Tibial artery (tissue), 4 donors: ENCODE measurements at regions of chr7 and their contacts with region 1.

Region 1: GRCh38 chr7:82395147-82395546 is 48.4 kb downstream of the CACNA2D1 start:
- DNase-seq: no peak
- H3K4me3 ChIP-seq: no peak overlapping the region
- H3K27ac ChIP-seq: no peak overlapping the region
- H3K4me1 ChIP-seq: no peaks in the 10 kb centered on the region
- H3K27me3 ChIP-seq: no peaks in the 10 kb centered on the region
- CTCF ChIP-seq: no peak

Region 2: DNA sequence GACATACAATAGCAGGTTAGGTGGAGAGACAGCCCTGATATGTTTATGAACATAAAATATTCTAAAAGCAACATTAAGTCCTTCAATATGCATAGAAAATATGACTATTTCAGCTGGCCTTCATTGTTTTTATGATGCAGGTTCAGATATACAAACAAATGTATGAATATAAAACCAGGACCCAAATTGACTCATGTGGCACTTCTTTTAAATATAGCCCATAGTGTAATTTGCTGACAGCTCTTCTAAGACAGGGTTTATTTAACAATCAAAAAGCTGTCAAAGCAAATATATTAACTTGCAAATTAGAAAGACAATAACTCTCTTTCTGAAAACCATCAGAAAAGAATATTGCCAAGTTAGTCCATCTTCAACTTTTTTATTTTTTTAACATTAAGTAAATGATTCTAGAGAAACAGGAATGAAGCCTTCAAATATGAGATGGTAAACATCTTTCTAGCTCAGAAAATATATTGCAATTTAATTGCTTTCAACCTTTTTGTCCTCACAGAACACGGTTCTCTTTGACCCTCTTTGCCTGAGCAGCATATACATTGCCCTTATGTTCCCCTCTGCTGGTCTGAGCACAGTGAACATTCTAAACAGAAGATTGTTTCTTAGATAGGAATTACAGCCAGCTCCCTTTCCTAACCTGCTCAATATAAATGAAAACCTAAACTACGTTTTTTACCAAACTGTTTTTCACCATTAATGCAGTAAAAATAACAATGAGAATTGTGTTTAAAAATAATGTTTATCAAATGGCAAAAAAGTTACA is 34.4 kb before region 1 on chr7:
- intact Hi-C with region 1: loop called (anchors 2 kb)
- DNase-seq: no peak
- H3K4me3 ChIP-seq: no peak overlapping the region
- H3K27ac ChIP-seq: no peak overlapping the region
- H3K4me1 ChIP-seq: peaks cover 0 to 20% (median 2%) of the 10 kb centered on the region in 4 donors
- H3K27me3 ChIP-seq: no peaks in the 10 kb centered on the region
- CTCF ChIP-seq: no peak

Region 3: GRCh38 chr7:82444220-82444909 is 49.2 kb after region 1 on chr7:
- intact Hi-C with region 1: no loop called
- DNase-seq: no peak
- H3K4me3 ChIP-seq: peak overlapping the region; percentile 95 to 99
- H3K27ac ChIP-seq: peak overlapping the region; percentile 95 to 96
- H3K4me1 ChIP-seq: peaks cover 0 to 23% (median 7%) of the 10 kb centered on the region in 4 donors
- H3K27me3 ChIP-seq: no peaks in the 10 kb centered on the region
- CTCF ChIP-seq: no peak

Region 4: DNA sequence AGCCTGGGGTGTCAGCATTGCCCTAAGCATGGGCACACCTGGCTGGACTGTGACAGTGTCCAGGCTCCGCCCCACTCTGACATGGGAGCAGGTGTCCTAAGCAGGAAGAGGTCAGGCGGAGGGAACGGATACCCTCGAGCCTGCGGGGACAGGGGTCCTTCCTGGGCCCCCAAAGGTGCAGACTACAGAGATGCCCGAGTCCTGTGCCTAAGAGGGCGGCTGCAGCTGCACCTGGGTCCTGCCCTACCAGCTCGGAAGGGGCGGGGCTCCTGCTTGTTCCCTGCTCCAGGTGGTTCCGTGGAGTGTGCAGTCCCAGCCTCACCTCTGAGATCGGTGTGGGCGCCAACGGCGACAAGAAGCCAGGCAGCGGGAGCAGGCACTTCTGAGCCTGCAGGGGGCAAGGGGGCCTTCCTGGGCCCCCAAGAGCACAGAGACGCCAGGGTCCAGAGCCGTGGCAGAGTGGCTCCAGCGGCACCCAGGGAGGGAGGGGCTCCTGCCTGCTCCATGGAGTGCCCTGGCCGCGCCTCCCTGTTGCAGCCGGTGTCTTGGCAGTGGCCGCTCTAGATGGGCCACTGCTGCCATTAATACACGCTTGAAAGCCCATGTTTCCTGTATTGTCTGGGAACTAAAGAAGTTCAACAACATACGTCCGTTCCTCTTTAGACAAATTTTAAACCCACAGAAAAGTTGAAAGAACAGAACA is 113.0 kb after region 1 on chr7:
- intact Hi-C with region 1: no loop called
- DNase-seq: no peak
- H3K4me3 ChIP-seq: no peak overlapping the region
- H3K27ac ChIP-seq: no peak overlapping the region
- H3K4me1 ChIP-seq: peaks cover 0 to 4% (median 0%) of the 10 kb centered on the region in 4 donors
- H3K27me3 ChIP-seq: peaks cover 0 to 4% of the 10 kb centered on the region in 2 donors
- CTCF ChIP-seq: no peak